Panc1 (cell line): ENCODE measurements at regions of chr7 and their contacts with region 1.

Region 1: GRCh38 chr7:125599387-125599786 is 669.8 kb upstream of the POT1 start:
- DNase-seq: peak; percentile 18
- ATAC-seq: no peak
- H3K4me3 ChIP-seq: no peak overlapping the region
- H3K27ac ChIP-seq: no peak overlapping the region
- H3K4me1 ChIP-seq: no peaks in the 10 kb centered on the region
- H3K27me3 ChIP-seq: no peaks in the 10 kb centered on the region
- CTCF ChIP-seq: no peak

Region 2: DNA sequence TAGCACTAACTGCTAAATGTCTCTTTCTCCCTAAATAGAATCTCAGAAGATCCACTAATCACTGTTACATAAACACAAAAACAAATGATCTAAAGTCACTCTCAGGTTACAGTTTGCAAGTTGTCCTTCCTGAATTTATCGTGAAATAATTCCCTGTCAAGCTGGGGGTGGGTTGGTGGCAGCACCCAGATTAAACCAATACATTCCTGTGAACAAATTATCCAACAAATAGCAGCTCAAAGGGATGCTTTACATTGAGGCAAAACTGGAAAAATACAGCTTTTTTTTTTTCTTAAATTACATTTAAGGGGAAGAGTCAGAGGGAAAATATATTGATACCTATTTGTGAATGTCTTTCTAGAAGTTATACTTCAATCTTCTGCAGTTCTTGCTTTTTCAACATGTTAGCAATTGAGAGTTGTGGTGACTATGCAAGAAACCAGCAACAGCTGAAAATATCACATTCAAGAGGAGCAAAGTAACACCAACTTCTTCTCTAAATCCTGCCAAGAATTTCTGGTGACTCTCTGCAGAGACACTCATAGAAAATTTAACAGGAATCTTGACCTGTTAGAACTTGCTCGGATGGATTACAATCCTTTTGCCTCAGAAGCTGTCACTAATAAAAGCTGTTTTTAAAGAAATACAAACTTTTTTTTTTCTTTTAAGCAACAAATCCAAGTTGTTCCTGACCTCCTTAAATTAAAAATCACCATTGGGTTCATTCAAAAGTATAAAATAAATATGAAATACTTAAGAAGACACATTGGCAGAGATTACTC is 1924.8 kb before region 1 on chr7:
- CTCF ChIA-PET with region 1: no interaction called
- POLR2A ChIA-PET with region 1: no interaction called
- in situ Hi-C with region 1: no loop called
- intact Hi-C with region 1: no loop called
- DNase-seq: no peak
- ATAC-seq: no peak
- H3K4me3 ChIP-seq: no peak overlapping the region
- H3K27ac ChIP-seq: no peak overlapping the region
- H3K4me1 ChIP-seq: no peaks in the 10 kb centered on the region
- H3K27me3 ChIP-seq: no peaks in the 10 kb centered on the region
- CTCF ChIP-seq: no peak

Region 3: GRCh38 chr7:125516194-125516593 is 83.2 kb before region 1 on chr7:
- CTCF ChIA-PET with region 1: no interaction called
- POLR2A ChIA-PET with region 1: no interaction called
- in situ Hi-C with region 1: no loop called
- intact Hi-C with region 1: no loop called
- DNase-seq: no peak
- ATAC-seq: no peak
- H3K4me3 ChIP-seq: no peak overlapping the region
- H3K27ac ChIP-seq: no peak overlapping the region
- H3K4me1 ChIP-seq: no peaks in the 10 kb centered on the region
- H3K27me3 ChIP-seq: no peaks in the 10 kb centered on the region
- CTCF ChIP-seq: no peak

Region 4: GRCh38 chr7:125561006-125561405 is 38.4 kb before region 1 on chr7:
- CTCF ChIA-PET with region 1: no interaction called
- POLR2A ChIA-PET with region 1: no interaction called
- in situ Hi-C with region 1: no loop called
- intact Hi-C with region 1: loop called (anchors 2 kb)
- DNase-seq: no peak
- ATAC-seq: no peak
- H3K4me3 ChIP-seq: peak overlapping the region; percentile 12 to 33; a peak in 3 of 4 replicates
- H3K27ac ChIP-seq: peak overlapping the region; percentile 25; the same call in 1 of the 2 replicates
- H3K4me1 ChIP-seq: no peaks in the 10 kb centered on the region
- H3K27me3 ChIP-seq: no peaks in the 10 kb centered on the region
- CTCF ChIP-seq: no peak

Region 5: GRCh38 chr7:125645770-125646169 is 46.4 kb after region 1 on chr7:
- CTCF ChIA-PET with region 1: no interaction called
- POLR2A ChIA-PET with region 1: interaction called, 15 read pairs
- in situ Hi-C with region 1: no loop called
- intact Hi-C with region 1: no loop called
- DNase-seq: no peak
- ATAC-seq: no peak
- H3K4me3 ChIP-seq: no peak overlapping the region
- H3K27ac ChIP-seq: no peak overlapping the region
- H3K4me1 ChIP-seq: no peaks in the 10 kb centered on the region
- H3K27me3 ChIP-seq: no peaks in the 10 kb centered on the region
- CTCF ChIP-seq: no peak